Heart left ventricle (tissue), 16 donors: ENCODE measurements at regions of chr17 and their contacts with region 1.

Region 1: GRCh38 chr17:12744298-12744697 is 45.0 kb upstream of the ARHGAP44 start:
- DNase-seq: peak in 4 of 5 donors; percentile 64 to 86 (median 73)
- ATAC-seq: peak; percentile 92 to 95 (median 94)
- H3K4me3 ChIP-seq: peak overlapping the region in 7 of 12 donors; percentile 16 to 46 (median 38)
- H3K27ac ChIP-seq: peak overlapping the region; percentile 44 to 88 (median 74)
- H3K4me1 ChIP-seq: peaks cover 0 to 30% (median 6%) of the 10 kb centered on the region in 12 donors
- H3K27me3 ChIP-seq: no peaks in the 10 kb centered on the region
- CTCF ChIP-seq: no peak
- POLR2A ChIP-seq: peak in 1 of 2 donors; percentile 27

Region 2: GRCh38 chr17:12250973-12251372 is 493.3 kb before region 1 on chr17:
- intact Hi-C with region 1: loop called in 8 of 10 experiments (anchors 5 to 10 kb)
- DNase-seq: no peak
- ATAC-seq: no peak
- H3K4me3 ChIP-seq: no peak overlapping the region
- H3K27ac ChIP-seq: no peak overlapping the region
- H3K4me1 ChIP-seq: peaks cover 0 to 11% (median 0%) of the 10 kb centered on the region in 12 donors
- H3K27me3 ChIP-seq: no peaks in the 10 kb centered on the region
- CTCF ChIP-seq: no peak
- POLR2A ChIP-seq: no peak

Region 3: DNA sequence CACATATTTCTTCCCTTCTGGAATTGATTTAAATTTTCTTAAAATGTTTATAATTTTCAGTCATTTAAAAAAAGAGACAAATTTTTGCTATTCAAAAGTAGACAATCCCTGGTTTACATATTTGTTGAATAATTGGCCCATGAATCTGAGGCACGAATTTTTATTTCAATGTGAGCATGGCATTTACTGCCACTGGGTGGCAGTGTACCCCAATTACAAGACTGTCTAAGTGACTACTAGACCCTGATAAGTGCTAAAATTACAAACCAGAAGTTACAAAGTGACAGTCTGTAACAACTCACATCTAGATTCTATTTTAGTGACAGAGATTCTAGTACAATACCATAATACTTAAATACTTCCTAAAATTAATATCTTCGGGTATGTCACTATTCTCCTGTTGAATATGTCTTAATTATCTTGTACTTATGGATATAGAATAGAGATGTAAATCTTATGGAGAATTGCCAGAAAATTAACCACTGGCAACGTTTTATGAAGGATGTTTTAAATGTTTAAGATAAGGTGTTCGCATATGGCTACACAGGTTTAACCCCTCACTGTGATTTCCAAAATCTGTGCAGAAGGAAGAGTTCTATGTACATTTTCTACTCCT is 487.8 kb before region 1 on chr17:
- intact Hi-C with region 1: loop called in 8 of 10 experiments (anchors 5 to 10 kb)
- DNase-seq: peak in 3 of 5 donors; percentile 26 to 43 (median 29)
- ATAC-seq: peak; percentile 54 to 79 (median 72)
- H3K4me3 ChIP-seq: no peak overlapping the region
- H3K27ac ChIP-seq: peak overlapping the region in 1 of 12 donors; percentile 2
- H3K4me1 ChIP-seq: peaks cover 0 to 21% (median 0%) of the 10 kb centered on the region in 12 donors
- H3K27me3 ChIP-seq: no peaks in the 10 kb centered on the region
- CTCF ChIP-seq: peak; percentile 65 to 81 (median 75)
- POLR2A ChIP-seq: no peak

Region 4: GRCh38 chr17:12673788-12674187 is 70.5 kb before region 1 on chr17:
- intact Hi-C with region 1: loop called in 3 of 10 experiments (anchors 5 kb)
- DNase-seq: no peak
- ATAC-seq: peak in 2 of 4 donors; percentile 43 to 57
- H3K4me3 ChIP-seq: no peak overlapping the region
- H3K27ac ChIP-seq: peak overlapping the region in 2 of 12 donors; percentile 40 to 89
- H3K4me1 ChIP-seq: peaks cover 0 to 44% (median 12%) of the 10 kb centered on the region in 12 donors
- H3K27me3 ChIP-seq: no peaks in the 10 kb centered on the region
- CTCF ChIP-seq: no peak
- POLR2A ChIP-seq: no peak